Mammary epithelial cell (primary cell): ENCODE measurements at regions of chr9 and their contacts with region 1.

Region 1: DNA sequence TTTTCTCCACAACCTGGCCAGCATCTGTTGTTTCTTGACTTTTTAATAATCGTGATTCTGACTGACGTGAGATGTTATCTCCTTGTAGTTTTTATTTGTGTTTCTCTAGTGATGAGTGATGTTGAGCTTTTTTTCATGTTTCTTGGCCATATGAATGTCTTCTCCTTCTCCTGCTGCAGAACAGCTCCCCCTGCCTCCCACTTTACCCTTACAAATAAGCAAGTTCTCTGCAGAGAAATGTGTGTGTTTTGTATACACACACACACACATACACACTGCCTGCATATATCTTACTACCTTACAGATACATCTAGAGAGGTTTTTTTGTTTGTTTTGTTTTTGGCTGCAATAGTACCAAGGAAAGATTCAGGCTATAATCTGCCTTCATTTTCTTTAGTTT is 88.7 kb upstream of the PHF24 start:
- DNase-seq: peak; percentile 10
- H3K4me3 ChIP-seq: no peak overlapping the region
- H3K27ac ChIP-seq: no peak overlapping the region
- H3K4me1 ChIP-seq: no peaks in the 10 kb centered on the region
- H3K27me3 ChIP-seq: no peaks in the 10 kb centered on the region
- CTCF ChIP-seq: peak; percentile 13 to 49

Region 2: GRCh38 chr9:34675048-34675714 is 194.2 kb before region 1 on chr9:
- CTCF ChIA-PET with region 1: interaction called, 3 read pairs
- dilution Hi-C with region 1: no loop called
- in situ Hi-C with region 1: loop called in 1 of 2 experiments (anchors 25 kb)
- intact Hi-C with region 1: no loop called
- DNase-seq: peak; percentile 47
- H3K4me3 ChIP-seq: no peak overlapping the region
- H3K27ac ChIP-seq: no peak overlapping the region
- H3K4me1 ChIP-seq: no peaks in the 10 kb centered on the region
- H3K27me3 ChIP-seq: no peaks in the 10 kb centered on the region
- CTCF ChIP-seq: peak; percentile 50 to 53

Region 3: DNA sequence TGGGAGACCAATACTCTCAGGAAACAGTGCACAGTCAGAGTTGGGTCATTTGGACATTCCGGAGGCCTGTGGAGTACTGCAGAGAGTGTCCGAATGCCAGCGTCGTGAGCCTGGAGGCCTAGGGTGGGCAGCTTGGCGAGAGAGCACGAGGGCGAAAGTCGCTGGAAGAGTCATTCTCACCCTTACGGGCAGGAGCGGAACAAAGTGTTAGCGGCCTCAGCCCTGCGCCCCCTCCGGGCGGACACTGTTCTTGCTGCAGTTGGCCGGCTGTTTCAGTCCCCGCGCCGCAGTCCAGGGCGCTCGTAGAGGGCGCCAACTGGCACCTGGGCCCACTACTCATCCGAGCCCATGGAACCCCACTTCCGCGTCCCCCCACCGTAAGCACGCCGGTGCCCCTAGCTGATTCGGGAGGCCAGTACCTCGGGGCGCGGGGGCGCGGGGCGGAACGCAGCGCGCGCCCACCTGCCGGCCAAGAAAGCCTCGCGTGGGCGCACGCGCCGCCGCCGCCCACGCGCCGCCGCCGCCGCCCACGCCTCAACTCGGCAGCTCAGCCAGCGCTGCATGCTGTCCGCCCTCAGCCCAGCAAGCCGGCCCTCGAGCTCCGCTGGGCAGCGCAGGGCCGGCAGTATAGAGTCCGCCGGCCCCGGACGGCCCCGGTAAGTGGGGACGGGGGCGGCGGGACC is 59.7 kb before region 1 on chr9:
- CTCF ChIA-PET with region 1: no interaction called
- dilution Hi-C with region 1: no loop called
- in situ Hi-C with region 1: no loop called
- intact Hi-C with region 1: loop called (anchors 10 kb)
- DNase-seq: peak; percentile 9
- H3K4me3 ChIP-seq: peak overlapping the region in 2 of 3 experiments; percentile 27 to 40
- H3K27ac ChIP-seq: no peak overlapping the region
- H3K4me1 ChIP-seq: peaks cover 7% of the 10 kb centered on the region
- H3K27me3 ChIP-seq: peaks cover 4% of the 10 kb centered on the region
- CTCF ChIP-seq: peak; percentile 35 to 56